ENCODE measurements at regions of chr11 and their contacts with region 1.

Region 1: GRCh38 chr11:1889224-1890120 is 2.2 kb downstream of the PRR33 start:
- DNase-seq: no peak
- H3K4me3 ChIP-seq: no peak overlapping the region
- H3K27ac ChIP-seq: no peak overlapping the region
- H3K4me1 ChIP-seq: no peaks in the 10 kb centered on the region
- CTCF ChIP-seq: no peak

Region 2: GRCh38 chr11:1772270-1773130 is 117.0 kb before region 1 on chr11:
- CTCF ChIA-PET with region 1: no interaction called
- POLR2A ChIA-PET with region 1: no interaction called
- intact Hi-C with region 1: no loop called
- DNase-seq: peak; percentile 13
- H3K4me3 ChIP-seq: no peak overlapping the region
- H3K27ac ChIP-seq: no peak overlapping the region
- H3K4me1 ChIP-seq: peaks cover 5% of the 10 kb centered on the region
- CTCF ChIP-seq: no peak

Region 3: GRCh38 chr11:1917671-1918516 is 28.4 kb after region 1 on chr11:
- CTCF ChIA-PET with region 1: no interaction called
- POLR2A ChIA-PET with region 1: no interaction called
- intact Hi-C with region 1: loop called (anchors 1 kb)
- DNase-seq: no peak
- H3K4me3 ChIP-seq: no peak overlapping the region
- H3K27ac ChIP-seq: no peak overlapping the region
- H3K4me1 ChIP-seq: no peaks in the 10 kb centered on the region
- CTCF ChIP-seq: no peak; the same call in 1 of the 2 replicates

Region 4: DNA sequence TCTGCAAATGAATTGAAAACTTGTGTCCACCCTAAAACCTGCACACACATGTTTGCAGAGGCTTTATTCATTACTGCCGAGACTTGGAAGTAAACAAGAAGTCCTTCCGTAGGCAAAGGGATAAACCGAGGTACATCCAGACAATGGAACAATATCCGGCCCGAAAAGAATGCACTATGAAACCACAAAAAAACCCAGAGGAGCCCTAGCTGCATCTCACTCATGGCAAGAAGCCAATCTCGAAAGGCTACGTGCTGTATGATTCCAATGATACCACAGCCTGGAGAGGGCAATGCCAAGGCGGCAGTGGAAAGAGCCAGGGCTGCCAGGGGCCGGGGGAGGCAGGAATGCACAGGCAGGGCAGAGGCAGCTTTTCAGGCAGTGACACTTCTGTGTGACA is 54.5 kb after region 1 on chr11:
- CTCF ChIA-PET with region 1: no interaction called
- POLR2A ChIA-PET with region 1: no interaction called
- intact Hi-C with region 1: loop called (anchors 10 kb)
- DNase-seq: no peak
- H3K4me3 ChIP-seq: no peak overlapping the region
- H3K27ac ChIP-seq: no peak overlapping the region
- H3K4me1 ChIP-seq: no peaks in the 10 kb centered on the region
- CTCF ChIP-seq: no peak

Region 5: DNA sequence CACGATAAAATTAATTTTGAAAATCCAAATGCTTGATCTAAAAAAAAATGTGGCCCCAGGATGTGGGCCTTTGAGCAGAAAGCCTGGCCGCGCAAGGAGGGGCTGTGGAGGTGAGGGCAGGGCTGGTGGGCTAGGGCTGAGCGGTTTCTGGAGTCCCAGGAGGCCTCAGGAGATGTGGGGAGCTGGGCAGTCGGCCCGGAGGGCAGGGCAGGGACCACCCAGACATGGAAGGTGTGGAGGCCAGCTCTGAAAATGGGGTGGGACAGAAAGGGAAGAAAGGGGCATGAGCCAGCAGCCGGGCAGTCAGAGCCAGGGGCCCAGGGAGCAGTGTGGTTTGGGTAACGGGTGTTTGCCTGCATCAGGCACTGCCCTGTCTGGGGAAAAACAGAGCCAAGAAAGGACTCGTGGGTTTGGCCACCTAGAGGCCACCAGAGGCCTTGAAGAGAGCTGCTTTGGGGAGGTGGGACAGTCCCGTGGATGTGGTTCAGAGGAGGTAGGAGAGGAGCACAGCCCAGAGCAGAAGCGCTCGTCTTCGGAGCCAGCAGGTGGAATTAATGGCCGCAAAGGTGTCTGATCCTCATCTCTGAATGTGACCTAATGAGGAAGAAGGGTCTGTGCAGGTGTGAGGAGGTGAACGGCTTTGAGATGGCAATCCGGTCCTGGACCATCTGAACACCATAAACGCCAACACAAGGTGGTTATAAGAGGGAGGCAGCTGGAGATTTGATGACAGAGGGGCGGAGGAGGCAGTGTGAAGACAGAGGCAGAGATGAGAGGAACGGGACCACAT is 199.5 kb after region 1 on chr11:
- CTCF ChIA-PET with region 1: no interaction called
- POLR2A ChIA-PET with region 1: no interaction called
- intact Hi-C with region 1: no loop called
- DNase-seq: no peak
- H3K4me3 ChIP-seq: no peak overlapping the region
- H3K27ac ChIP-seq: no peak overlapping the region
- H3K4me1 ChIP-seq: no peaks in the 10 kb centered on the region
- CTCF ChIP-seq: no peak